ENCODE measurements at regions of chr10 and their contacts with region 1.

Region 1: GRCh38 chr10:110311357-110311949 is 6.7 kb upstream of the SMNDC1 start:
- DNase-seq: peak; percentile 77
- H3K4me3 Mint-ChIP-seq: no peak overlapping the region
- H3K27ac Mint-ChIP-seq: no peak overlapping the region
- H3K4me1 Mint-ChIP-seq: no peaks in the 10 kb centered on the region
- H3K27me3 Mint-ChIP-seq: no peaks in the 10 kb centered on the region
- CTCF ChIP-seq: peak; percentile 69

Region 2: GRCh38 chr10:110395725-110396651 is 84.5 kb after region 1 on chr10:
- CTCF ChIA-PET with region 1: no interaction called
- POLR2A ChIA-PET with region 1: interaction called, 4 read pairs
- intact Hi-C with region 1: loop called (anchors 2 kb)
- DNase-seq: peak; percentile 95
- H3K4me3 Mint-ChIP-seq: no peak overlapping the region
- H3K27ac Mint-ChIP-seq: peak overlapping the region; percentile 92
- H3K4me1 Mint-ChIP-seq: peaks cover 53% of the 10 kb centered on the region
- H3K27me3 Mint-ChIP-seq: no peaks in the 10 kb centered on the region
- CTCF ChIP-seq: no peak

Measured in MCF 10A (cell line).